ENCODE measurements at regions of chr20 and their contacts with region 1.

Region 1: GRCh38 chr20:49610701-49611538 is 43.0 kb upstream of the PTGIS start:
- DNase-seq: peak; percentile 72
- H3K4me3 Mint-ChIP-seq: no peak overlapping the region
- H3K27ac Mint-ChIP-seq: no peak overlapping the region
- H3K4me1 Mint-ChIP-seq: peaks cover 12% of the 10 kb centered on the region
- H3K27me3 Mint-ChIP-seq: no peaks in the 10 kb centered on the region
- CTCF ChIP-seq: peak; percentile 96

Region 2: DNA sequence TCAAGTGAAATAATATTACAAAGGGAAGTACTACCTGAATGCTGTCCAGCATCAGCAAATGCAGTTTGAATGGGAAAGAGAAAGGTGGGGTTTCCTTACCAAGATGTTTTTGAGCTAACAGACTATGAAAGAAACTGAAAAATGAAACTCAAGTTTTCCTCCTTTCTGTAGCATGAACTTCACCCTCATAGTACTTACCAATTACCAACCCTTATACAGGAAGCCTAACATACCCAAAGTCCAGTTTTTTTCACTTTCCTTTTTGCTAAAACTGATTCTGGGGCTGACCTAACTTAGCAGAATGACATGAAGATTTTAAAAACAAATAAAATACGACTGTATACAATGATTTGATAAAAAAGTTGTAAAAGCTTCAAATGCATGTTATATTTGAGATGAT is 338.3 kb before region 1 on chr20:
- CTCF ChIA-PET with region 1: no interaction called
- POLR2A ChIA-PET with region 1: no interaction called
- intact Hi-C with region 1: no loop called
- DNase-seq: no peak
- H3K4me3 Mint-ChIP-seq: no peak overlapping the region
- H3K27ac Mint-ChIP-seq: no peak overlapping the region
- H3K4me1 Mint-ChIP-seq: peaks cover 47% of the 10 kb centered on the region
- H3K27me3 Mint-ChIP-seq: no peaks in the 10 kb centered on the region
- CTCF ChIP-seq: no peak

Region 3: GRCh38 chr20:49526056-49526455 is 84.9 kb before region 1 on chr20:
- CTCF ChIA-PET with region 1: interaction called, 15 read pairs
- POLR2A ChIA-PET with region 1: no interaction called
- intact Hi-C with region 1: no loop called
- DNase-seq: no peak
- H3K4me3 Mint-ChIP-seq: no peak overlapping the region
- H3K27ac Mint-ChIP-seq: no peak overlapping the region
- H3K4me1 Mint-ChIP-seq: peaks cover 18% of the 10 kb centered on the region
- H3K27me3 Mint-ChIP-seq: no peaks in the 10 kb centered on the region
- CTCF ChIP-seq: no peak

Region 4: DNA sequence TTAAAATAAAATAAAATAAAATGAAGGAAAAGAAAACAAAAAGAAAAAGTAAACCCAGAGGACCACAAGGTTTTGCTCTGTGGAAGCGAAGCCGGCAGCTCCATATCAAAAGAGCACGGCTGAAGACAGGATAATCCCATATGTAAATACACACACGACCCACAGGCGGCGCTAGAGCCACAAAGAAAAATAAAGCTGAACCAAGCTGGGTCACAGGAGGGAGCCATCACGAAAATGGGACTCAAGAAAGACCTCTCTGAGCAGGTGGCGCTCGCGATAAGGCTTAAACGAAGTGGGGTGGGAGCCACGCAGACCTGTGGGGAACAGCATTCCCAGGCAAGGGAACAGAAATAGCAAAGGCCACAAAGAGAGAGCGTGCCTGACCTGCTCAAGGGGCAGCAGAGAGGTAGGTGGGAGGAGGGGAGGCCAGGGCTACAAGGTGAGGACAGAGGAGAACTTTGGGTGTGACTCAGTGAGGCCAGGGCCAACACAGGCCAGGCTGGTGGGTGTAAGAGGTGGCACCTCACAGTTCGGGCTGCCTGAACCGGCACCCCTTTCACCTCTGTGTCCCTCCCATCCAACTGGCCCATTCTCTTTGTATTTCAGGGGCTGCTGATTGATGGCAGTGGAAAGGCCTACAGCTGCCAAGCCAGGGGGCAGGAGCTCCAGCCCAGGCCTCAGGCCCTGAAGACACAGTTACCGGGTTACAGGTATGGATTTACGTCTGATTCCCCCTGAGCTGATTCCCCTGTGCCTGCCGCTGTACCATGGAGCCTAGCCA is 69.0 kb before region 1 on chr20:
- CTCF ChIA-PET with region 1: interaction called, 411 read pairs
- POLR2A ChIA-PET with region 1: interaction called, 7 read pairs
- intact Hi-C with region 1: loop called (anchors 1 kb)
- DNase-seq: peak; percentile 86
- H3K4me3 Mint-ChIP-seq: no peak overlapping the region
- H3K27ac Mint-ChIP-seq: no peak overlapping the region
- H3K4me1 Mint-ChIP-seq: no peaks in the 10 kb centered on the region
- H3K27me3 Mint-ChIP-seq: no peaks in the 10 kb centered on the region
- CTCF ChIP-seq: peak; percentile 78

Region 5: GRCh38 chr20:49641683-49642656 is 31.1 kb after region 1 on chr20:
- CTCF ChIA-PET with region 1: interaction called, 10 read pairs
- POLR2A ChIA-PET with region 1: interaction called, 5 read pairs
- intact Hi-C with region 1: no loop called
- DNase-seq: no peak
- H3K4me3 Mint-ChIP-seq: no peak overlapping the region
- H3K27ac Mint-ChIP-seq: no peak overlapping the region
- H3K4me1 Mint-ChIP-seq: no peaks in the 10 kb centered on the region
- H3K27me3 Mint-ChIP-seq: no peaks in the 10 kb centered on the region
- CTCF ChIP-seq: no peak

Region 6: DNA sequence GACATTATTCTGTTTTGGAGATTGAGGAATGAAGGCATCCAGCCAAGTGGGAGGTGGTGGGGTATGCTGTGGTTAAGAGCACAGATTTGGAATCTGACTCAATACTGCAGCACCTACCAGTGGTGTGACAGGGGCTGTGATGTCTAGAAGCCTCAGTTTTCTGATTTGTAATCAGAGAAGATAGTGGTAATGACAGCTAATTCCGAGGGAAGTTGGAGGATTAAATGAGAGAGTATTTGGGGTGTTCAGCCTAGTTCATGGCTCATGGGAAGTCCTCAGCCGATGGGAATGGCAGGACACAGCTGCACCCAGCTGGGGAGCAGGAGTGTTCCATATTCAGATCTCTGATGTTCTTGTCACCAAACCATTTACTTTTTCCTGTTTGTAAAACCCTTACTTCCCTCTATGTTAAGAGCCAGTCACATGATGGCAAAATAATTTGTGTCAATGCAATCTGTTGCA is 211.0 kb after region 1 on chr20:
- CTCF ChIA-PET with region 1: interaction called, 8 read pairs
- POLR2A ChIA-PET with region 1: interaction called, 3 read pairs
- intact Hi-C with region 1: loop called (anchors 1 kb)
- DNase-seq: peak; percentile 59
- H3K4me3 Mint-ChIP-seq: no peak overlapping the region
- H3K27ac Mint-ChIP-seq: no peak overlapping the region
- H3K4me1 Mint-ChIP-seq: peaks cover 11% of the 10 kb centered on the region
- H3K27me3 Mint-ChIP-seq: no peaks in the 10 kb centered on the region
- CTCF ChIP-seq: no peak

Region 7: DNA sequence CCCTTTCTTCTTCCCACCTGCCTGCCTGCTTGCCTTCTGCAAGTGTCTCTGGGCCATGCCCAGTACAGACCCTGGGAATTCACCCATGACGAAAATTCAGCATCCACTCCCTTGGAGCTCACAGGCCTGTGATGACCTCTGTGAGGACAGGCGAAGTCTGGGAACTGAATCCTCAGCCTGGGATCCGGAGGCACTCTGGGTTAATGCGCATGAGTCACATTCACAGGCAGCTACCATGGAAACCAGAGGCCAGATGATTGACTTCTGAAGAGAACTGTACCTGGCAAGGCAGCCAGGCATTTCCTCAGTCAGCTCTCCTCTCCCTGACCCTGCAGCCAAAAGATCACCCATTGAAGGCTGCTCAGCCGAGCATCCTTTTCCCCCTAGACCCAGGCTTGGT is 242.7 kb after region 1 on chr20:
- CTCF ChIA-PET with region 1: interaction called, 354 read pairs
- POLR2A ChIA-PET with region 1: interaction called, 6 read pairs
- intact Hi-C with region 1: no loop called
- DNase-seq: peak; percentile 73
- H3K4me3 Mint-ChIP-seq: no peak overlapping the region
- H3K27ac Mint-ChIP-seq: no peak overlapping the region
- H3K4me1 Mint-ChIP-seq: peaks cover 14% of the 10 kb centered on the region
- H3K27me3 Mint-ChIP-seq: no peaks in the 10 kb centered on the region
- CTCF ChIP-seq: no peak

Region 8: DNA sequence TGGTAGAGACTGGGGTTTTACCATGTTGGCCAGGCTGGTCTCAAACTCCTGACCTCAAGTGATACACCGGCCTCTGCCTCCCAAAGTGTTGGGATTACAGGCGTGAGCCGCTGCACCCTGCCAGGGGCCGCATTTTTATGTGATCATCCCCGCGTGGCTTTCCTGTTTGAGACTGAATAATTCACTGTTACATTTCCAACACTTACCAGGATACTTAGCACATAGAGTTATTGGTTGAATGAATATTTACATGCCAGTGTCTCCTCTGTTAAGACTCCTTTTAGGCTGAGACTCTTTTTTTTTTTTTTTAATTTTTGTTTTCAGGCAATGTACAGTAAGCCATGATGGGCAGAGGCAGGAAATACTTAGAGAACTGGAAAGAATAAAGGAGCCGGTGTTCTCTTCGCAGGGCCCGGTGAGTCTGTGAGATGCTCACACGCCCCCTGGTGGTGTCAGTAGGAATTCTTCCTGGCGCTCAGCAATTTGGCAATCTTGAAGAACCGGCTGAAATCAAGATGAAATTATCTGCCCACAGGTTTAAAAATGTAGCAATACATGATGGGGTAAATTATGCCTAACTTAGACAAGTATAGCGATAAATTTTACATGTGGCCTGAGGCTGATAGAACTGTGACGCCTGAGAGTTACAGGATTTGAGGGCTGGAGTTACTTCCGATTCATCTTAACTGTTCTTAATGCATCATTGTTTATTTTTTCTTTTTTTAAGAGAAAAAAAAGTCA is 317.7 kb after region 1 on chr20:
- CTCF ChIA-PET with region 1: interaction called, 20 read pairs
- POLR2A ChIA-PET with region 1: no interaction called
- intact Hi-C with region 1: loop called (anchors 2 kb)
- DNase-seq: peak; percentile 84
- H3K4me3 Mint-ChIP-seq: no peak overlapping the region
- H3K27ac Mint-ChIP-seq: no peak overlapping the region
- H3K4me1 Mint-ChIP-seq: no peaks in the 10 kb centered on the region
- H3K27me3 Mint-ChIP-seq: no peaks in the 10 kb centered on the region
- CTCF ChIP-seq: peak; percentile 80

Measured in MCF 10A (cell line).